ENCODE measurements at regions of chr7 and their contacts with region 1.

Region 1: DNA sequence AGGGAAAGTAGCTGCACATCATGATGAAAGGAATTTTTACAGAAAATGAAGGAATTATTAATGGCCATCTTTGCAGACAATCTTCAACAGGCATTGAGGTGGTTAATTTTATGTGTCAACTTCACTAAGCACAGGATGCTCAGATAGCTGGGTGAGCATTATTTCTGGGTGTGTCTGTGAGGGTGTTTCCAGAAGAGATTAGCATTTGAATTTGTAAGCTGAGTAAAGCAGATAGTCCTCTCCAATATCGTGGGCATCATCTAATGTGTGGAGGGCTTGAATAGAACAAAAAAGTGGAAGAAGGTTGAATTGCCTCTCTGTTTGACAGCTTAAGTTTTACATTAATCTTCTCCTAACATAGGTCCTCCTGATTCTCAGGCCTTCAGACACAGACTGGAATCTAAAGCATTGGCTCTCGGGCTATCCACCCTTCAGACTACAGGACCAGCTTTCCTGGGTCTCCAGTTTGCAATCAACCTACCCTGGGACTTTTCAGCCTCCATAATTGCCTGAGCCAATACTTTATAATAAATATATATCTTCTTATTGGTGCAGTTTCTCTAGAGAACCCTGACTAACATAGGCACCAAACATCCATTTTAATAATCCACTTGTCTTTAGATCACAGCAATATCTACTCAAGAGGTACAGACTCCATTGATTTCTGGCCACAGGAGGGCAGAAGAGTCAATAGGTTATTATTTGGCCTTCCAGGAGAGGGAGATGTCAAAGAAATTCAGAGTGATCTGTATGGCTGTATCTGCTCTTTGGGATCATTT is 10.5 kb upstream of the CRPPA start:
- DNase-seq: peak; percentile 37
- H3K4me3 ChIP-seq: no peak overlapping the region
- H3K27ac ChIP-seq: no peak overlapping the region
- H3K4me1 ChIP-seq: no peaks in the 10 kb centered on the region
- H3K27me3 ChIP-seq: no peaks in the 10 kb centered on the region
- CTCF ChIP-seq: peak; percentile 63 to 69

Region 2: DNA sequence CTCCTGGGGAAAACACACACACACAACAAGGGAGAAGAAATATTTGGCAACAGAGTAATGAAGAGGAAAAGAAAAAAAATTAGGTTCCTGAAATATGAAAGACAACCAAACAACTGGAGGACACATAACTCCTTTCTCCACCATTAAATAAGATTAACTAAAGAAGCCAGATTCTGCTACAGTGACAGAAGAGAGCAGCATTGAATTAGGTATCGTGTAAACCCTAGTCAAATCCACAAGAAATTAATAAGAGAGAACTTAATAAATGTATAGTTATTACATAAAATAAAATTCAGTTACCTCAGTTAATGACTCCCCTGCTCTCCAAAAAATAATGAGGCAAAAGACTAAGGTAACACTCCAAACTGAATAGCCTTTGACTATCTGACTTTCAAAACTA is 317.2 kb before region 1 on chr7:
- CTCF ChIA-PET with region 1: no interaction called
- dilution Hi-C with region 1: no loop called
- in situ Hi-C with region 1: no loop called
- intact Hi-C with region 1: loop called (anchors 1 kb)
- DNase-seq: peak; percentile 18
- H3K4me3 ChIP-seq: no peak overlapping the region
- H3K27ac ChIP-seq: no peak overlapping the region
- H3K4me1 ChIP-seq: no peaks in the 10 kb centered on the region
- H3K27me3 ChIP-seq: no peaks in the 10 kb centered on the region
- CTCF ChIP-seq: peak; percentile 44 to 57

Region 3: GRCh38 chr7:16129431-16130116 is 302.3 kb before region 1 on chr7:
- CTCF ChIA-PET with region 1: no interaction called
- dilution Hi-C with region 1: no loop called
- in situ Hi-C with region 1: loop called in 1 of 2 experiments (anchors 25 kb)
- intact Hi-C with region 1: no loop called
- DNase-seq: peak; percentile 73
- H3K4me3 ChIP-seq: no peak overlapping the region
- H3K27ac ChIP-seq: peak overlapping the region; percentile 24
- H3K4me1 ChIP-seq: peaks cover 16% of the 10 kb centered on the region
- H3K27me3 ChIP-seq: no peaks in the 10 kb centered on the region
- CTCF ChIP-seq: no peak

Region 4: GRCh38 chr7:16465469-16466361 is 33.9 kb after region 1 on chr7 and contains the start of gene SOSTDC1:
- CTCF ChIA-PET with region 1: no interaction called
- dilution Hi-C with region 1: no loop called
- in situ Hi-C with region 1: no loop called
- intact Hi-C with region 1: loop called (anchors 2 kb)
- DNase-seq: peak; percentile 63
- H3K4me3 ChIP-seq: peak within 1 kb of the TSS; percentile 24 to 60 (median 54)
- H3K27ac ChIP-seq: peak within 1 kb of the TSS; percentile 64
- H3K4me1 ChIP-seq: peaks cover 18% of the 10 kb centered on the region
- H3K27me3 ChIP-seq: no peaks in the 10 kb centered on the region
- CTCF ChIP-seq: no peak
- total RNA-seq, gene SOSTDC1: 0.73 to 40.0 TPM

Region 5: GRCh38 chr7:16559497-16560179 is 127.8 kb after region 1 on chr7:
- CTCF ChIA-PET with region 1: interaction called, 9 read pairs
- dilution Hi-C with region 1: no loop called
- in situ Hi-C with region 1: loop called in 1 of 2 experiments (anchors 5 kb)
- intact Hi-C with region 1: no loop called
- DNase-seq: no peak
- H3K4me3 ChIP-seq: no peak overlapping the region
- H3K27ac ChIP-seq: no peak overlapping the region
- H3K4me1 ChIP-seq: no peaks in the 10 kb centered on the region
- H3K27me3 ChIP-seq: no peaks in the 10 kb centered on the region
- CTCF ChIP-seq: no peak

Region 6: GRCh38 chr7:16564909-16565426 is 133.1 kb after region 1 on chr7:
- CTCF ChIA-PET with region 1: interaction called, 9 read pairs
- dilution Hi-C with region 1: no loop called
- in situ Hi-C with region 1: loop called in 1 of 2 experiments (anchors 5 kb)
- intact Hi-C with region 1: loop called (anchors 1 kb)
- DNase-seq: peak; percentile 39
- H3K4me3 ChIP-seq: no peak overlapping the region
- H3K27ac ChIP-seq: no peak overlapping the region
- H3K4me1 ChIP-seq: no peaks in the 10 kb centered on the region
- H3K27me3 ChIP-seq: no peaks in the 10 kb centered on the region
- CTCF ChIP-seq: peak; percentile 69 to 70

Region 7: DNA sequence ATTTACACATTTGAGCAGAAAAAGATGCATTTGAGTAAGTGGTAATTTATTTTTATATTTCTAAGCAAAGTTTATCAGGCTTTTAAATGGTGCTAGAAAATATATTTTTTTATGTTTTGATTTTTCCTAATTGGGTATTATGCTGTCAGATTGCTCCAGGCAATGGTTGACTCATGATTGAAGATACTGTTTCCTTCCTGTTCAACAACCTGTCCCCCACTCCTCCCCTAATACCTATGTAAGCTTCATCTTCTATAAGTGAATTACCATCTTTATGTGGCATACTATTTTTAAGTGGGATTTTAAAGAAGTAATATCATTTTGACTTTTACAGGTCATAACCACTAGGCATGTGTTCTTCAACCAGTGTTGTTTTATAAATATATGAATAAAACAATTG is 343.2 kb after region 1 on chr7:
- CTCF ChIA-PET with region 1: no interaction called
- dilution Hi-C with region 1: no loop called
- in situ Hi-C with region 1: no loop called
- intact Hi-C with region 1: no loop called
- DNase-seq: peak; percentile 27
- H3K4me3 ChIP-seq: no peak overlapping the region
- H3K27ac ChIP-seq: no peak overlapping the region
- H3K4me1 ChIP-seq: peaks cover 15% of the 10 kb centered on the region
- H3K27me3 ChIP-seq: no peaks in the 10 kb centered on the region
- CTCF ChIP-seq: no peak

Measured in mammary epithelial cell (primary cell).